ENCODE measurements at regions of chr12 and their contacts with region 1.

Region 1: GRCh38 chr12:52278541-52279421 is 4.3 kb downstream of the KRT86 start:
- DNase-seq: peak; percentile 90
- CTCF ChIP-seq: peak; percentile 96

Region 2: GRCh38 chr12:52156736-52157565 is 121.8 kb before region 1 on chr12:
- CTCF ChIA-PET with region 1: interaction called, 11 read pairs
- POLR2A ChIA-PET with region 1: no interaction called
- DNase-seq: peak; percentile 78
- CTCF ChIP-seq: peak; percentile 98

Region 3: DNA sequence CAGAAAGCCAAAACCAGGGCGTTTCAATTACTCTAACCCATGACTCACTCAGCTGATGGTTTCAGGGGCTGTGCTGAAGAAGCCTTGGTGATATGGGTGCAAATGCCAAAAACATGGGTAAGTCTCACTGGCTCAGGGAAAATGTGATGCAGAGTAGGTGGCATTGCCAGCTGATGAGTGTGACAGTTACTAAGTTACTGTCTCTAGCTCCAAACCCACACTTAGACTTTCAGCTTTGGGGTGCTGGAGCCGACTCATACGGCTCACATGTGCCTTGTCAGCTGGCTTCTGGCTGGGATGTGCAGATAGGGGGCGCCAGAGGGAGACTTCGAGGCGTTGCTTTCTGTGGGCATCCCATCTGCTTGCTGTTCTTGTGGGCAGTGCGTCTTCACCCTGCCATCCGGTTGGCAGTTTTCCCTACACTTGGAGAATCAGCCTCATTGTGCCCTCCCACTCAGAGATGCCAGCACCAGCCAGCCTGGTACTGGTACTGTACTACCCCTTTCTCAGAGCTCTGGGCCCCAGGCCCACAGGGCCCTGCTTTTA is 56.8 kb before region 1 on chr12:
- CTCF ChIA-PET with region 1: interaction called, 38 read pairs
- POLR2A ChIA-PET with region 1: no interaction called
- DNase-seq: no peak
- CTCF ChIP-seq: no peak

Region 4: GRCh38 chr12:52243856-52244614 is 34.7 kb before region 1 on chr12:
- CTCF ChIA-PET with region 1: interaction called, 29 read pairs
- POLR2A ChIA-PET with region 1: no interaction called
- DNase-seq: peak; percentile 89
- CTCF ChIP-seq: no peak

Region 5: GRCh38 chr12:52257074-52257551 is 21.7 kb before region 1 on chr12:
- CTCF ChIA-PET with region 1: interaction called, 89 read pairs
- POLR2A ChIA-PET with region 1: no interaction called
- DNase-seq: no peak
- CTCF ChIP-seq: no peak

Region 6: DNA sequence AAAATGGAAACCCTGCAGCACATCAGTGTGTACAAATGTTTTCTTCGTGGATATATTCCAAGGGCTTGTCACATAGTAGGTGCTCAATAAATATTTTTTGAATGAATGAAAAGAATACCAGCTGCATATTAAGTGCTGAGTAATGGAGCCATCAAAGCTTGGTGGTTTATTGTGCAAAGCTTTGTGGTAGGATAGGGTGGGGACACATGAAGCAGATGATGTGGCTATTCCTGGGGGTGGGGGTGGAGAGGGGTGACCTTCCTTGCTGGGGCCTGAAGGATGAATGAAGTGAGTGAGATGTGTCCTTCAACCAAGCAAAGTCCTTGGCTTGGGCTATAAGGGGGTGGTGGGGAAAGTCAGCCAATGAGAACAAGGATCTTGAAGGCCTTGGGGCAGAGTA is 16.9 kb after region 1 on chr12:
- CTCF ChIA-PET with region 1: interaction called, 39 read pairs
- POLR2A ChIA-PET with region 1: no interaction called
- DNase-seq: no peak
- CTCF ChIP-seq: no peak

Region 7: DNA sequence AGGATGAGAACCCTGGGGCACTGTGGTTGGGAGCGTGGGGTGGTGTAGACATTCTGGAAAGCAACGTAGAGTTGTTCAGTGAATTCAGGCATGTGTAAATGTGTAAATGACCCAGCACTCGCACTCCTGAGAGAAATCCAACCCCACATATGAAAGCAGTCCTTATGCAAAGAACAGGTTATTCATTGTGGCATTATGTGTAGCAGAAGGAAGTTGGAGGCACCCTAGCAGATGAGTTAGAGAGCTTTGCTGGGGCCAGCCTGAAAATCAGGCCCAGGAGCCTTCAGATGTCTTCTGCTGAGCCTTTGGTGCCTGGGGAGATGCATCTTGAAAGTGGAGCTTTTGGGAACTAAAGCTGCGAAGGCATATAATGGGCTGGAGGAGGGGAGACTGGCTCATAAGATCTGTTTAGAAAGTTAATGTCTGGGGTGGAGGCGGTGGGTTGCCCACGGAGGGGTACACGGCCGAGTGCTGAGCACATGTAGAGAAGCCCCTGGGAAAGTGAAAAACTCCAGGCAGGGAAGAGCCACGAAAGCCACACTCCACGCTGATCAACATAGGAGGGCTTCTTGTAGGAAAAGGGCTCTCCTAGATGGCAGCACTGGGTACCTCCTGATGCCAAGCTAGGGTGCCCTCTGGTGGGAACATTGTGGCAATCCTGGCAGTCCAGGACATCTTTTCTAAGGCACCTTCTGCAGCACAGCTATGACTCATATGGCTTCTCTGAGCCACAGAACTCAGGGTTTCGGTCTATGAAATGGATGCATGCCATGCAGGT is 48.5 kb after region 1 on chr12:
- CTCF ChIA-PET with region 1: interaction called, 17 read pairs
- POLR2A ChIA-PET with region 1: no interaction called
- DNase-seq: peak; percentile 76
- CTCF ChIP-seq: peak; percentile 80